ENCODE measurements at regions of chr19 and their contacts with region 1.

Region 1: DNA sequence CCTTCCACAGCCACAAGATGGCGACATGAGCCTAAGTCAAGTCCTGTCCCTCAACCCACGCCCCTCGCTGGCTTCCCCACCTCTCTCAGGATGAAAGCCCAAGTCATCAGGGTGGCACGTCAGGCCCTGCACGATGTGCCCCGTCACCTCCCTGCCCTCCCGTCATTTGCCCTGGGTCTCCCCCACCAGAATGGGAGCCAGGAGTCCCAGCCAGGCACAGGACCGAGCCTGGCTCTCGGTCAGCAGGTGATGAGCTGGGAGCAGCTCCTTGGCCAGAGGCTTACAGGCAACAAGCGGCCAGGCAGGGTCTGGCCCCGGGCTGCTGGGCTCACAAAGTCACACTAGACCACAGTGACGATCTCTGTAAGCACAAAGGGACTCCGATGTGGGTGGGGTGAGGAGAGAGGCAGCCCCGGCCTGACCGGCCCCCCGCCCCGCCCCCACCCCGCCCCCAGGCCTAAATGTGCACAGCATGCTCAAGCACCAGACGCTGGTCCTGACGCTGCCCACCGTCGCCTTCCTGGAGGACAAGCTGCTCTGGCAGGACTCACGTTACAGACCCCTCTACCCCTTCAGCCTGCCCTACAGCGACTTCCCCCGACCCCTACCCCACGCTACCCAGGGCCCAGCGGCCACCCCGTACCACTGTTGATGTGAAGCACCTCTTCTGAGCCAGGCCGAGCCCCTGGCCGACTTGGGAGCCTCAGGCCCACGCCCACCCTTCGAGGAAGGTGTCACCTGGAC is 7.3 kb downstream of the MRPL4 start:
- DNase-seq: peak; percentile 82
- ATAC-seq: peak; percentile 71
- H3K4me3 ChIP-seq: no peak overlapping the region
- H3K27ac ChIP-seq: peak overlapping the region; percentile 56
- H3K4me1 ChIP-seq: peaks cover 24 to 32% of the 10 kb centered on the region in 2 experiments
- H3K27me3 ChIP-seq: no peaks in the 10 kb centered on the region
- CTCF ChIP-seq: peak; percentile 77 to 86 (median 80)
- POLR2A ChIP-seq: no peak
- RAD21 ChIP-seq: peak; percentile 82

Region 2: GRCh38 chr19:10269333-10270179 is 10.2 kb after region 1 on chr19:
- CTCF ChIA-PET with region 1: interaction called, 37 read pairs
- POLR2A ChIA-PET with region 1: interaction called, 5 read pairs
- RAD21 ChIA-PET with region 1: interaction called, 4 to 6 read pairs
- intact Hi-C with region 1: no loop called
- DNase-seq: peak; percentile 47
- ATAC-seq: peak; percentile 84
- H3K4me3 ChIP-seq: peak overlapping the region; percentile 22 to 28; a peak in 3 of 4 replicates
- H3K27ac ChIP-seq: peak overlapping the region; percentile 8; the same call in 1 of the 2 replicates
- H3K4me1 ChIP-seq: peaks cover 7 to 22% of the 10 kb centered on the region in 2 experiments; a peak in 3 of 4 replicates
- H3K27me3 ChIP-seq: no peaks in the 10 kb centered on the region
- CTCF ChIP-seq: peak; percentile 91 to 95 (median 94)
- POLR2A ChIP-seq: no peak
- RAD21 ChIP-seq: peak; percentile 99

Region 3: GRCh38 chr19:10380313-10381102 is 121.2 kb after region 1 on chr19 and contains the start of gene TYK2:
- CTCF ChIA-PET with region 1: interaction called, 27 read pairs
- POLR2A ChIA-PET with region 1: interaction called, 5 read pairs
- RAD21 ChIA-PET with region 1: interaction called in 1 of 2 experiments, 3 read pairs
- intact Hi-C with region 1: no loop called
- DNase-seq: peak; percentile 96
- ATAC-seq: peak; percentile 94
- H3K4me3 ChIP-seq: peak within 1 kb of the TSS; percentile 80 to 96
- H3K27ac ChIP-seq: peak within 1 kb of the TSS; percentile 86
- H3K4me1 ChIP-seq: peaks cover 2 to 13% of the 10 kb centered on the region in 2 experiments; a peak in 3 of 4 replicates
- H3K27me3 ChIP-seq: no peaks in the 10 kb centered on the region
- CTCF ChIP-seq: no peak
- POLR2A ChIP-seq: peak; percentile 74
- RAD21 ChIP-seq: no peak
- total RNA-seq, gene TYK2: 110 TPM

Region 4: DNA sequence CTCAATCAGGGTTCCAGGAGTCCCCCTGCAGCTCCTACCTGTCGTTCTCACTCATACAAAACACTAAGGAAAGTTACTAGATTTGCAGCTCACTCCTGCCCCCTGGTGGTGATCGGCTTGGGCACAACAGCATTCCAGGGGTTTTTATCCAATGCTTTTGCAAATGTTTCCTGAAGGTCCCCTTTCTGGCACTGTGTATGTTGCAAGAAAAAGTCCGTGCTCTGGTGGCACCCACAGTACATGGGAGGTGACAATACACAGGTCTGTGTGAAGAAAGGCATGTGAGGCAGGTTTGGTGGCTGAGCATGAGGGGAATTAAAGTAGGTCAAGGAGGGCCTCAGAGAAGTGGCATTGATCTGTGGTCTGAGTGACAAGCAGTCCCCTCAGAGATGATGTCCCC is 129.6 kb after region 1 on chr19:
- CTCF ChIA-PET with region 1: interaction called, 233 read pairs
- POLR2A ChIA-PET with region 1: interaction called, 8 read pairs
- RAD21 ChIA-PET with region 1: interaction called, 10 to 22 read pairs
- intact Hi-C with region 1: loop called (anchors 1 kb)
- DNase-seq: peak; percentile 77
- ATAC-seq: peak; percentile 67
- H3K4me3 ChIP-seq: no peak overlapping the region
- H3K27ac ChIP-seq: no peak overlapping the region
- H3K4me1 ChIP-seq: 0 out of 4 replicates have a peak, but pooled peaks cover 0 to 3% of the 10 kb centered on the region in 2 experiments
- H3K27me3 ChIP-seq: no peaks in the 10 kb centered on the region
- CTCF ChIP-seq: peak; percentile 92 to 97 (median 97)
- POLR2A ChIP-seq: no peak
- RAD21 ChIP-seq: peak; percentile 95

Region 5: GRCh38 chr19:10416380-10417257 is 157.3 kb after region 1 on chr19:
- CTCF ChIA-PET with region 1: interaction called, 11 read pairs
- POLR2A ChIA-PET with region 1: no interaction called
- RAD21 ChIA-PET with region 1: no interaction called
- intact Hi-C with region 1: no loop called
- DNase-seq: peak; percentile 89
- ATAC-seq: peak; percentile 56
- H3K4me3 ChIP-seq: peak overlapping the region; percentile 51 to 58
- H3K27ac ChIP-seq: peak overlapping the region; percentile 89
- H3K4me1 ChIP-seq: peaks cover 25 to 56% of the 10 kb centered on the region in 2 experiments
- H3K27me3 ChIP-seq: no peaks in the 10 kb centered on the region
- CTCF ChIP-seq: peak; percentile 80 to 99 (median 92)
- POLR2A ChIP-seq: no peak
- RAD21 ChIP-seq: no peak